GM10248 (cell line): ENCODE measurements at regions of chrX and their contacts with region 1.

Region 1: DNA sequence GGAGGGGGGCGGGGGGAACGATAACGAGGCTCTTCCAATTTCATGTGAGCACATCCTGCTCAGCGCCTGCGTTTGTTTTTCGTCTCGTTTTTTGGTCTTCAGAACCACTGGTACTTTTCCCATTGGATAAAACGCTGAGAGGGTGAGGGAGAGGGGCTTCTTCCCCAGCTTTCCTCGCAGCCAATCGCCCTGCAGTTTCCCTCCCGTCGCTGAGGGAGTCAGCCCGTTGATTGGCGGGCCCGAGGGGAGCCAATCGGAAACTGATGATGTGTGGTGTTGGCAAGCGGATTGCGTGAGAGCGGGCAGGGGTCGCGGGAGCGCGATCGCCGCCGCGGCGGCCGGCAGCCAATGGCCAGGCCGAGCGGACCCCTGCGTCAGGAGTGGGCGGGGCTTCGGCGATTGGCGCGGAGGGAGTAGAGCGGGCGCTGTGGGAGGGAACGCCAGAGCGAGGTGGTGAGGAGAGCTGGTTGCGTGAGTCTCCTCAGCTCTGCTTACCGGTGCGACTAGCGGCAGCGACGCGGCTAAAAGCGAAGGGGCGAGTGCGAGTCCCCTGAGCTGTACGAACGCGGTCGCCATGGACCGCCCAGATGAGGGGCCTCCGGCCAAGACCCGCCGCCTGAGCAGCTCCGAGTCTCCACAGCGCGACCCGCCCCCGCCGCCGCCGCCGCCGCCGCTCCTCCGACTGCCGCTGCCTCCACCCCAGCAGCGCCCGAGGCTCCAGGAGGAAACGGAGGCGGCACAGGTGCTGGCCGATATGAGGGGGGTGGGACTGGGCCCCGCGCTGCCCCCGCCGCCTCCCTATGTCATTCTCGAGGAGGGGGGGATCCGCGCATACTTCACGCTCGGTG is at the start of gene TSPYL2:
- DNase-seq: peak; percentile 90
- CTCF ChIP-seq: no peak

Region 2: DNA sequence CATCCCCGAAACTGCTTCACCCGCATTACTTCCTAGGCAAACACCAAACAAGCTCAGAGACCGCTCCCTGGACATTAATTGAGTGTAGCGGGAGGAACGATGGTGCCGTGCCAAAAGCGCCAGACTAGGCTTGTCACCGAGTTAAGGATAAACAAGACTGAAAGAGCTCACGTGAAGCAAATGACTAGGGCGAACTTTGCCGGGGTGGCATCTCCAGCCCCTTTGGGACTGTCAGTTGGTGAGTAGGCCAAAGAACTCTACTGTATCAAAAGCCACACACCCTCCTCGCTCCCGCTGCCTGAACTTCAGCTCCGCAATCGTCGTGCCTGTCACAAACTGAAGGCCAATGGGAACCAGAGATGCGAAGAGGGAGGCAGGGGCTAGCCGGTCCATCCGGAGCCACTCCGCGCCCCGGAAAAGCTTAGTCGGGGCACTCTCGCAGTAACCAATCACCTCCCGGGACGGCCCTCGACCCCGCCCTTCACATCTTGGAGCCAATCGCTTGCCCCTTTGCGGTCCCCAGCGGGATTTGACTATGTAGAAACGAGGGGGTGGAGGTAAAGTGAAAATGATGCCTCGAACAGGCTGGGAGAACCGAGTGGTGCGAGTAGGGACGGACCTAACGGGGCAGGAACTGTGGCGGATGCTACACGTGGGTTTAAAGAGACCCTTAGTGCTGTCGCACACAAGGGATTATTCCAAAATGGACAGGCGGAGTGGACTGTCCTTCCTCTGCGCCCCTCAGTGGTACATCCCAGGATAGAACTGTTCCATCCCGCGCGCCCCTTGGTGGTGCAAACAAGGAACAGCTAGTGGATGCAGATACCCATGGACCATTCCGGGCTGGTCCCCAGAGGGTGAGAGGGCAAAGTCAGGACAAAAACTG is 86.8 kb before region 1 on chrX:
- CTCF ChIA-PET with region 1: no interaction called
- POLR2A ChIA-PET with region 1: interaction called, 10 read pairs
- DNase-seq: peak; percentile 87
- CTCF ChIP-seq: peak; percentile 53

Region 3: GRCh38 chrX:53048169-53049126 is 33.7 kb before region 1 on chrX and contains the start of gene GPR173:
- CTCF ChIA-PET with region 1: no interaction called
- POLR2A ChIA-PET with region 1: no interaction called
- DNase-seq: no peak
- CTCF ChIP-seq: no peak